Prostate gland (tissue), 2 donors: ENCODE measurements at regions of chr1 and their contacts with region 1.

Region 1: DNA sequence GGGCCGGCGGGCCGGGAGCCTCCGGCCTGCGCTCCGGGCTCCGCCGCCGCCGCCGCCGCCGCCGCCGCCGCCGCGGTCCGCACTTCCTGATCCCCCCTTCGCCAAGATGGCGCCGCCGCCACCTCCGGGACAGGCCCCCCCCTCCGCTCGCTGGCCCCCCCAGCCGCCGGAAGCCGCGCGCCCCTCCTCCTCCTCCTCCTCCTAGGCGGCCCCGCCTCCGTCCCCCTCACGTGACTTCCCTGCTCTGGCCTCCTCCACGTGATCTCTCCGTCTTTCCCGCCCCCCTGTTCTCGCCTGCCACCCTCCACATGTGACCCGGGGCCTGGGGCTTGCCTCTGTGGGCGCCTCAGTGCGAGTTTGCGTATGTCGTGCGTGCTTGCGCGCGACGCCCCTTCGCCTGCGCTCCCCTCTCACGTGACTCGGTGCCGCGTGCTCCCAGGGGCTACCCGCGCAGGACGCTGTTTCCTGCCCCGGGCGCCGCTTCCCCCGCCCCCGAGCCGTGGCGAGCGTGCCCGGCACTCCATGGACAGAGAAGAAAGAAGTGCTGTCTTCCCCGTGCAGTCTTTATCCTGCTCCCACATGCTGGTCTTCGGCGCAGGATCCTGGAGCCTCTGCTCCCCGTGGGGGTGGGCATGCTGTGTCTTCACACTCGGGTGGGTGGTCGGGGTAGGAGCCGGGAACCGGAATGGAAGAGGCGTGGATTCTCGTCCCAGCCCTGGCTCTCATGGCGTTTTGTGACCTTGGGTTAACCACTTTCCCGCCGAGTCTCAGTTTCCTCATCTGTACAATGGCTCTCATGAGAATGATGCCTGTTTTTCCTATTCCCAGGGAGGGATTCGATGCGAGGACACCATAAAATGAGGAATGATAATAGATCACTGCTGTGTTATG is at the start of gene UBE2Q1:
- DNase-seq: peak; percentile 99
- H3K4me3 ChIP-seq: peak within 1 kb of the TSS; percentile 85 to 88
- H3K27ac ChIP-seq: peak within 1 kb of the TSS; percentile 82 to 89
- H3K4me1 ChIP-seq: peaks cover 6% of the 10 kb centered on the region
- H3K27me3 ChIP-seq: no peaks in the 10 kb centered on the region
- CTCF ChIP-seq: peak in 1 of 4 experiments; percentile 29
- POLR2A ChIP-seq: peak; percentile 57
- total RNA-seq, gene UBE2Q1: 24.7 to 43.7 TPM

Region 2: GRCh38 chr1:154404984-154405761 is 153.6 kb before region 1 on chr1 and contains the start of gene IL6R:
- intact Hi-C with region 1: loop called (anchors 10 kb)
- DNase-seq: peak; percentile 94
- H3K4me3 ChIP-seq: peak within 1 kb of the TSS; percentile 66 to 84
- H3K27ac ChIP-seq: peak within 1 kb of the TSS; percentile 97 to 98
- H3K4me1 ChIP-seq: no peaks in the 10 kb centered on the region
- H3K27me3 ChIP-seq: no peaks in the 10 kb centered on the region
- CTCF ChIP-seq: peak; percentile 30 to 88 (median 80)
- POLR2A ChIP-seq: peak; percentile 87
- total RNA-seq, gene IL6R: 70.1 to 80.7 TPM

Region 3: GRCh38 chr1:154760469-154760933 is 201.7 kb after region 1 on chr1:
- intact Hi-C with region 1: loop called (anchors 2 kb)
- DNase-seq: peak; percentile 60
- H3K4me3 ChIP-seq: peak overlapping the region in 1 of 2 donors; percentile 23
- H3K27ac ChIP-seq: no peak overlapping the region
- H3K4me1 ChIP-seq: no peaks in the 10 kb centered on the region
- H3K27me3 ChIP-seq: no peaks in the 10 kb centered on the region
- CTCF ChIP-seq: peak; percentile 57 to 91 (median 78)
- POLR2A ChIP-seq: no peak

Region 4: DNA sequence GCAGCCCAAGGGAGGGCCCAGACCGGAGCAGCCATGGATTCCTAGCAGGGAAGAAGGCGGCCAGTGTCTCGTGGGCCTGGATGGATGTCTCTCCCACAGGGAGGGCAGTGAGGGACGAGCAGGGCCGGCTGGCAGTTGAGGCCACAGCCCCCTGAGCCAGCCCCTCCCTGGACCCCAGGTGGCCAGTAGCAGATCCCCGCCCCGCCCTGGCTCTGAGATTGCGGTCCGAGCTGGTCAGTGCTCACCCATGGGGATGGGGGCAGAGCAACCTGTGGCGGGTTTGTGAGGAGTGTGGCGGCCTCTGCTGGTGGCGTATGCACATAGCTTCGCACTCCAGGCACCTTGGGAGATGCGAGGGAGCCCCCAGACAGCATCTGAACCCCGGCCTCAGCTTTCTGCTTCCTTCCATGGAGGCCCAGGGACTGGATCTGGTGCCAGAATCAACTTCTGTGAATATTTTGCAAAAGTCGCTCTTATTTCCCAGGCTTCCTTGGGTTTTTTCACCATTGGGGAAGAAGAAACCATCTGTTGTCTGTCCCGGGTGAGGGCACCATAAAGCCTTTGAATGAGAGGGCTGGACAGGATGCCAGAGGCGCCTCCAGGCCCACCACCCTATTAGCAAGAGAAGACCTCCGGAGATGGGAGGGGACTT is 319.7 kb after region 1 on chr1:
- intact Hi-C with region 1: loop called (anchors 2 kb)
- DNase-seq: peak; percentile 73
- H3K4me3 ChIP-seq: no peak overlapping the region
- H3K27ac ChIP-seq: no peak overlapping the region
- H3K4me1 ChIP-seq: no peaks in the 10 kb centered on the region
- H3K27me3 ChIP-seq: no peaks in the 10 kb centered on the region
- CTCF ChIP-seq: peak; percentile 54 to 91 (median 86)
- POLR2A ChIP-seq: no peak

Region 5: DNA sequence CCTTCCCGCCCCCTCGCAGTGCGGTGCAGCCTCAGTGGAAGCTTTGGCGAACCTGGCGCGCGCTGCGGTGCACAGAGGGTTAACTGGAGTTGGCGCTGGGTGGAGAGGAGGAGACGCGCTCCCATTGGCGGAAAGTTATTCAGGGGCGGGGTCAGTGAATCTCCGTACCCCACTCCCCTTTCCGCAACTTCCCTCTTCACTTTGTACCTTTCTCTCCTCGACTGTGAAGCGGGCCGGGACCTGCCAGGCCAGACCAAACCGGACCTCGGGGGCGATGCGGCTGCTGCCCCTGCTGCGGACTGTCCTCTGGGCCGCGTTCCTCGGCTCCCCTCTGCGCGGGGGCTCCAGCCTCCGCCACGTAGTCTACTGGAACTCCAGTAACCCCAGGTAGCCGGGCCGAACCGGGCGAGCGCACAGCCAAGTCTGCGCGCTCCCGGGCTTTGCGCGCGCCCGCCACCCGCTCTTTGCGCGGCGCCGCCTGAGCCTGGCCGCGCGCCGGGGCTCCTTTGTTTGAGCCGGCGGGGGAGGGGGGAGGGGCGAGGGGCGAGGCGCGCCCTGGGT is 504.8 kb after region 1 on chr1 and contains the start of gene EFNA4:
- intact Hi-C with region 1: loop called (anchors 10 kb)
- DNase-seq: peak; percentile 89
- H3K4me3 ChIP-seq: peak within 1 kb of the TSS; percentile 68 to 69
- H3K27ac ChIP-seq: peak within 1 kb of the TSS; percentile 89 to 91
- H3K4me1 ChIP-seq: peaks cover 10% of the 10 kb centered on the region
- H3K27me3 ChIP-seq: no peaks in the 10 kb centered on the region
- CTCF ChIP-seq: peak in 1 of 4 experiments; percentile 7
- POLR2A ChIP-seq: peak; percentile 79
- total RNA-seq, gene EFNA4: 10.3 to 23.4 TPM